Right cardiac atrium (tissue), 5 donors: ENCODE measurements at regions of chr18 and their contacts with region 1.

Region 1: DNA sequence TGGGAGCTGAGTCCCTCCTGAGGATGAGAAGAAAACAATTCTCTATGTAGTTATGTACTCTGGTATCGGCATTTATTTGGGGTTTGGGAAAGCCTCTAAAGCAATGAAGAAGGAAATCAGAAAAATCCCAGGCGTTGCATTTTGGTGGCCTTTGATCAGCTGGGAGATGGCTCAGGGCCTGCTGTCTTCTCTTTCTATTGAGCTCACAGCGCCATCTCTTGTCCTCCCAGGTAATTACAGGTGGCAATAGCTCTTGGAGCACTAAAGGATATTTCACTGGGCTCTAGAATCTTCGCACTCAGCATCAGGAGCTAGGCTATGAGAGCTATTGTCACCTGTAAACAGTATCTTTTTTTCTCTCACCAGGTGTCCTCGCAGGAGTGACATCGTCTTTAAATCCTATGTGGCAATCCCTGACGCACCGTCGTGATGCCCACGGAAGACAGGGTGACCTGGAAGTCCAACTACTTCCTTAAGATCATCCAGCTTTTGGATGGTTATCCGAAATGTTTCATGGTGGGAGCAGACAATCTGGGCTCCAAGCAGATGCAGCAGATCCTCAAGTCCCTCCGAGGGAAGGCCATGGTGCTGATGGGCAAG is 76.1 kb upstream of the PMAIP1 start:
- DNase-seq: peak; percentile 55 to 76 (median 57)
- ATAC-seq: peak; percentile 78 to 81
- H3K4me3 ChIP-seq: no peak overlapping the region
- H3K27ac ChIP-seq: no peak overlapping the region
- H3K4me1 ChIP-seq: no peaks in the 10 kb centered on the region
- H3K27me3 ChIP-seq: no peaks in the 10 kb centered on the region

Region 2: GRCh38 chr18:59631583-59632181 is 192.0 kb before region 1 on chr18:
- intact Hi-C with region 1: loop called in 2 of 4 experiments (anchors 5 kb)
- DNase-seq: no peak
- ATAC-seq: no peak
- H3K4me3 ChIP-seq: no peak overlapping the region
- H3K27ac ChIP-seq: no peak overlapping the region
- H3K4me1 ChIP-seq: no peaks in the 10 kb centered on the region
- H3K27me3 ChIP-seq: no peaks in the 10 kb centered on the region

Region 3: DNA sequence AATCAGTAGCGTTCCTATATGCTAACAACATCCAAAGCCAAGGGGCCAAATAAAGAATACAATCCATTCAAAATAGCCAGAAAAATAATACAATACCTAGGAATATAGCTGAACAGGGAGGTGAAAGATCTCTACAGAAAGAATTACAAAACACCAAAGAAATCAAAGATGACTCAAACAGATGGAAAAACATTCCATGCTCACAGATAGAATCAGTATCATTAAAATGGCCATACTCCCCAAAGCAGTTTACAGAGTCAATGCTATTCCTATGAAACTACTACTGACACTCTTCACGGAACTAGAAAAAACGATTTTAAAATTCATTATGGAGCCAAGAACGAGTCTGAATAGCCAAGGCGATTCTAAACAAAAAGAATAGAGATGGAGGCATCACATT is 183.9 kb before region 1 on chr18:
- intact Hi-C with region 1: loop called in 1 of 4 experiments (anchors 5 kb)
- DNase-seq: no peak
- ATAC-seq: no peak
- H3K4me3 ChIP-seq: no peak overlapping the region
- H3K27ac ChIP-seq: no peak overlapping the region
- H3K4me1 ChIP-seq: no peaks in the 10 kb centered on the region
- H3K27me3 ChIP-seq: no peaks in the 10 kb centered on the region

Region 4: GRCh38 chr18:59697236-59697932 is 126.3 kb before region 1 on chr18 and contains the start of gene CCBE1:
- intact Hi-C with region 1: loop called in 1 of 4 experiments (anchors 5 kb)
- DNase-seq: peak; percentile 53 to 88 (median 88)
- ATAC-seq: peak; percentile 78 to 81
- H3K4me3 ChIP-seq: peak within 1 kb of the TSS; percentile 8
- H3K27ac ChIP-seq: no peak within 1 kb of the TSS
- H3K4me1 ChIP-seq: no peaks in the 10 kb centered on the region
- H3K27me3 ChIP-seq: no peaks in the 10 kb centered on the region
- total RNA-seq, gene CCBE1: 0.78 to 3.5 (median 1.9) TPM

Region 5: DNA sequence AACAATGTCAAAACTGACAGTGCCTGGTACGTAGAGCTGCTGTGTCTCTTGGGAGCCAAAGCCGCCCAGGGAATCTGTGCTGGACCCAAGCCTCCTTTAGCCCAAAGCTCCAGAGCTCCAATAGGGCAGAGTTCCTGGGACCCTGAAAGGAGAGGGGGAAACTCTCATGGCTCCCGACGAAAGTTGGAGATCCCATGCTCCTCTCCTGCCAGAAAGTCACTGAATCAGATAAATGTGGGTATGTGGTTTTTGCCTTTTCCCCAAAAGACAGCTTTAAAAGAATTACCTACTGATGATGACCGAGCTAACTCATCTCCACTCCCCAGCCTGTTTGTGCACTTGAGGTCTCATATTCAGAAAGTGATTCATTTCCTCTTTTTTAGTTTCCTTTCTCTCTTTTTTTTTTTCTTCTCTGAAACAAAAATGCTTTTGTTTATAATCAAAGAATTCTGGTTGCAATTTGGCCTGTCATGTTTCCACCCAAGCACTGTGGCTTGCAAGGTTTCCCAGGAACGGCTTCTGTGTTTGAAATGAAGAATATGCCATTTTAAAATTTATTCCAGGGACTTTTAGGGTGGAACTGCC is 62.0 kb after region 1 on chr18:
- intact Hi-C with region 1: no loop called
- DNase-seq: no peak
- ATAC-seq: no peak
- H3K4me3 ChIP-seq: no peak overlapping the region
- H3K27ac ChIP-seq: no peak overlapping the region
- H3K4me1 ChIP-seq: peaks cover 6% of the 10 kb centered on the region
- H3K27me3 ChIP-seq: no peaks in the 10 kb centered on the region